Heart left ventricle (tissue), 16 donors: ENCODE measurements at regions of chr12 and their contacts with region 1.

Region 1: DNA sequence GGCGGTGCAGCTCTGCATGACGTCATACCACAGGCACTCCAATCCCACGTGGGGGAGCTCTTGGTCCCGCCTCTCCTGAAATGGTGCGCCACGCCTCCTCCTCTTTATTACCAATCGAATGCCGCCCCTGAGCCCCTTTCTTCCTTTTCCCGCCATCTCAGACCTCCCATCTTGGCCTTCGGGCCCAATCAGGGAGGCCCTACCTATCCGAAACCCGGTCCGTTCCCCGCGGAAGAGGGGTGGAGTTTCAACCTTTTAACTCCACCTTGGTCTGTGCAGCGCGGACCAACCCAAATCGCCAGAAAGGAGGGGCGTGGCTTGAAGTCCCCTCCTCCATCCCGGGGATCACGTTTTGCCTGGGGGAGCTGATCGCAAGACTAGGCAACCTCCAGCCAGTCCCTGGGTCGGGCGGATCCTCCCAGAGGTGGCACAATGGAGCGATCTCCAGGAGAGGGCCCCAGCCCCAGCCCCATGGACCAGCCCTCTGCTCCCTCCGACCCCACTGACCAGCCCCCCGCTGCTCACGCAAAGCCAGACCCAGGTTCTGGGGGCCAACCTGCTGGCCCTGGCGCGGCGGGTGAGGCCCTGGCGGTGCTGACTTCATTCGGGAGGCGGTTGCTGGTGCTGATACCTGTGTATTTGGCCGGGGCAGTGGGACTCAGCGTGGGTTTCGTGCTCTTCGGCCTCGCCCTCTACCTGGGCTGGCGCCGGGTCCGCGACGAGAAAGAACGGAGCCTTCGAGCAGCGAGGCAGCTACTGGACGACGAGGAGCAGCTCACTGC is at the start of gene ESYT1:
- DNase-seq: peak; percentile 97 to 99 (median 99)
- ATAC-seq: peak; percentile 95 to 98 (median 96)
- H3K4me3 ChIP-seq: peak within 1 kb of the TSS; percentile 75 to 97 (median 84)
- H3K27ac ChIP-seq: peak within 1 kb of the TSS; percentile 23 to 94 (median 90)
- H3K4me1 ChIP-seq: peaks cover 8 to 61% (median 31%) of the 10 kb centered on the region in 12 donors
- H3K27me3 ChIP-seq: no peaks in the 10 kb centered on the region
- CTCF ChIP-seq: no peak
- POLR2A ChIP-seq: peak in 1 of 2 donors; percentile 97
- total RNA-seq, gene ESYT1: 26.8 to 81.1 (median 43.4) TPM

Region 2: GRCh38 chr12:56152318-56153033 is 24.4 kb after region 1 on chr12 and contains the start of gene MYL6B:
- intact Hi-C with region 1: loop called in 3 of 10 experiments (anchors 1 to 5 kb)
- DNase-seq: peak; percentile 94 to 97 (median 96)
- ATAC-seq: peak; percentile 95 to 98 (median 97)
- H3K4me3 ChIP-seq: peak within 1 kb of the TSS; percentile 22 to 92 (median 72)
- H3K27ac ChIP-seq: peak within 1 kb of the TSS; percentile 80 to 98 (median 94)
- H3K4me1 ChIP-seq: peaks cover 4 to 35% (median 24%) of the 10 kb centered on the region in 12 donors
- H3K27me3 ChIP-seq: no peaks in the 10 kb centered on the region
- CTCF ChIP-seq: no peak
- POLR2A ChIP-seq: peak in 1 of 2 donors; percentile 62
- total RNA-seq, gene MYL6B: 30.1 to 55.2 (median 41.1) TPM

Region 3: DNA sequence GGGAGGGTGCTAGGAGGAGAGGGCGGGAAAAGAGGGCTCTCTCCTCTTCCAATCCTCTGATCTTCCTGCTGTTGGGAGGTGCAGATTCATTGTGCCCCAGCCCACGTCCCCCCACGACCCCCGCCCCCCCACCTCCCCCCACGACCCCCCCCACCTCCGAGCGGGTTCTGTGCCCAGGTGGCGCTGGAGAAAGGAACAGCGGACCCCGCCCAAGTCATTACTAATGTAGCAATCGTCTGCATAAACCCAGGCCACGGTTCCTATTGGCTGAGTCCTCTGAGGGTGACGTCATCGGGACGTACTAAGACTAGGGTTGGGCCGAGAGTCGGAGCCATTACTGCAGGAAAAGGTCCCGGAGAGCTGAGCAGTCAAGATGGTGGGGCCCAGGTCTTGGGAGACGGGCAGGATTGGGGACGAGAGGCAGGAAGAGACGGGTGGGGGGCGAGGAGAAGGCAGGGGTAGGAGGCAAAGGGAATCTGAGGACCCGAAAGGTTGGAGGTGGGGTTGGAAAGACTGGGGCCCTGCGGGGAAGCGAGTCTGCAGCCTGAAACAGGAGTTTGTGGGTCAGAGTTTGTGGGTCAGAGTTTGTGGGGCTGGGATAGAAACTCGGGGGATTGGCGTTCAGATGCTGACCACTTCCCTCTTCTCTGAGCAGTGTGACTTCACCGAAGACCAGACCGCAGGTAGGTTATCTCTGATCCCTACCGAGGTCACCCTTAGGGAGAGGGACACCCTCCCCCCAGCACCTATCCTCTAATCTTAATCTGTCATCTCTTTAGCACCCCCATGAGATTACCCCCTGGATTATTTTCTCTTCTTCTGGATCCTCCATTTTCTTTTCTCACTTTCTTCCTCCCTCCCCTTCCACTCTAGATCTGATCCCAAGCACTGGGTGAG is 30.2 kb after region 1 on chr12 and contains the start of gene MYL6:
- intact Hi-C with region 1: loop called in 7 of 10 experiments (anchors 1 to 5 kb)
- DNase-seq: peak; percentile 92 to 98 (median 98)
- ATAC-seq: peak; percentile 88 to 92 (median 90)
- H3K4me3 ChIP-seq: peak within 1 kb of the TSS; percentile 62 to 98 (median 90)
- H3K27ac ChIP-seq: peak within 1 kb of the TSS; percentile 92 to 99 (median 98)
- H3K4me1 ChIP-seq: peaks cover 4 to 48% (median 37%) of the 10 kb centered on the region in 12 donors
- H3K27me3 ChIP-seq: no peaks in the 10 kb centered on the region
- CTCF ChIP-seq: no peak
- POLR2A ChIP-seq: peak; percentile 99
- total RNA-seq, gene MYL6: 355 to 949 (median 613) TPM

Region 4: GRCh38 chr12:56224102-56224701 is 96.1 kb after region 1 on chr12 and contains the start of gene NABP2:
- intact Hi-C with region 1: loop called in 1 of 10 experiments (anchors 5 kb)
- DNase-seq: peak; percentile 98 to 99 (median 99)
- ATAC-seq: peak; percentile 80 to 90 (median 85)
- H3K4me3 ChIP-seq: peak within 1 kb of the TSS; percentile 52 to 97 (median 66)
- H3K27ac ChIP-seq: peak within 1 kb of the TSS; percentile 19 to 98 (median 92)
- H3K4me1 ChIP-seq: peaks cover 8 to 46% (median 37%) of the 10 kb centered on the region in 12 donors
- H3K27me3 ChIP-seq: no peaks in the 10 kb centered on the region
- CTCF ChIP-seq: peak; percentile 66 to 98 (median 91)
- POLR2A ChIP-seq: peak in 1 of 2 donors; percentile 55
- total RNA-seq, gene NABP2: 18.0 to 27.4 (median 20.7) TPM

Region 5: DNA sequence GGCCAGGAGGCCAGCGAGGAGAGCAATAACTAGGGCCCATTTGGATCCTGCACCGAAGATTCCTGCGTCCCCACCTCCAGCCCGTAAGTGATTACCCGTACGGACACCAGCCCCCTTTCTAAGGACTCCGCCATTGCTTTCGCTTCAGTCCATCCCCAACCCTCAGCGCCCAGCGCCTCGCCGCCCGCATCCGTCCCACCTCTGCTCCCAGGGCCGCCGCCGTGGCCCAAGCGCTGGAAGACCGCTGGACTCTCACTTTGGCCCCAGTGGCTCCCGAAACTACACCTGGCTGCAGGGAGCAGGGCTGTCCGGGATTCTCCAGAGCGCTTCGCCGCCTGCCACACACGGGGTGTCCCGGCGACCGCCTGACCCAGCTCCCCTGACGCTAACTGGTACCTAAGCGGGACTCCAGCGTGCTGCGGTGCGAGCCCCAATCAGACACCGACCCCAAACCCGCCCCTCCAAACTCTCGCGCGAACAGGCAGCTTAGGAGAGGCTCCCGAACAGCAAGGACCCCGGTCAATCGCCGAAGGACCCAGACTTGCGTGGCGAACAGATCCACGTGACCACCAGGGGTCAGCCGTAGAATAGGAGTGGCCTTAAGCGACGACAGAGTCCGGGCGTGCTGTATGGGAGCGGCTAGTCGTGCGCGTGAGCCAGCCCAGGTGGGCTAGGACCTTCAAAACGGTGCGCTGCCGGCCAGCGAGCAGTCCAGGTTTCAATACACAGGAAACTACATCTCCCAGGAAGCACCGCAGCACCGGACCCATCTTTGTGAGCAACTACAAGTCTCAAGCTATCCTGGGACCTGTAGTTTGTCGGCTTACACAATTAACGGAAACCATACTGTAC is 187.8 kb after region 1 on chr12 and contains the start of gene CNPY2:
- intact Hi-C with region 1: loop called in 1 of 10 experiments (anchors 10 kb)
- DNase-seq: peak; percentile 95 to 97 (median 97)
- ATAC-seq: peak; percentile 93 to 96 (median 96)
- H3K4me3 ChIP-seq: peak within 1 kb of the TSS; percentile 44 to 97 (median 88)
- H3K27ac ChIP-seq: peak within 1 kb of the TSS; percentile 84 to 99 (median 93)
- H3K4me1 ChIP-seq: peaks cover 0 to 20% (median 13%) of the 10 kb centered on the region in 12 donors
- H3K27me3 ChIP-seq: no peaks in the 10 kb centered on the region
- CTCF ChIP-seq: peak in 8 of 12 donors; percentile 14 to 36 (median 24)
- POLR2A ChIP-seq: peak in 1 of 2 donors; percentile 80
- total RNA-seq, gene CNPY2: 26.8 to 61.0 (median 35.6) TPM

Region 6: DNA sequence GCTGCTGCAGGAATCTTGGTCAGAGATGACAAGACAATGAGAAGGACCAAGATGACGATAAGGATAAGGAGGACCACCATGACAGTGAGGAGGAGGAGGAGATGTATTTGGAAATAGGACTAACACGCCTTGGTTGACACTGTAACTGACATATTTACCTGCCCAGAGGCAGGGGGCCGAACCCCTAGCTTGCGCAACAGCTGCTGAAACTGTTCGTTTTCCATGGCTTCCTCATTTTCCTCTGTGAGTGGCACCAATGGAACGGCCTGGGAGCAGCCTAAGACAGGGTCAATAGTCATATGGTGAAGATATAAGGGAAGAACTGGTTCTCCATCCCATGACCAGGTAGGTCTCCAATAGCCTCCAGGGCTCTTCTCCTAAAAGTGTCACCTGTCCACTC is 292.3 kb after region 1 on chr12:
- intact Hi-C with region 1: no loop called
- DNase-seq: no peak
- ATAC-seq: no peak
- H3K4me3 ChIP-seq: no peak overlapping the region
- H3K27ac ChIP-seq: no peak overlapping the region
- H3K4me1 ChIP-seq: no peaks in the 10 kb centered on the region
- H3K27me3 ChIP-seq: no peaks in the 10 kb centered on the region
- CTCF ChIP-seq: no peak
- POLR2A ChIP-seq: no peak